IMR-90 (cell line): ENCODE measurements at regions of chr1 and their contacts with region 1.

Region 1: DNA sequence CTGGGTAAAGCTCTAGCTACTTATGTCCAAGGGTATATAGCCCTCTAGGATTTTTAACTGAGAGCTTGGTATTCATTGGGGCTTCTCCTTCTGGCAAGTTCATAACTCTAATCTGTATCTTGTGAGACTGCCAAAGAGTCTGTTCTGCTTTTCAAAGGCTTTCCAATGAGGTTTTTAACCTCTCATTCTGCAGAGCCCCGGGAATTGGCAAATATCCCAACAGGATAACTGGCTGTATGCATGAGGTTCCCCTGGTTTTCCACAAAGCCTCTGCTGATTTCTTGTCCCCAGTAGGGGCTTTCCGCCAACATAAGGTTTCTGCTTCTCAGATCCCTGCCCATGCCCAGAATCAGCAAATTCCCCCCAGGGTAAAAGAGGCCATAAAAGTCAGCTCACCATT is 40.9 kb downstream of the RPL5 start:
- DNase-seq: no peak
- ATAC-seq: no peak
- H3K4me3 ChIP-seq: no peak overlapping the region
- H3K27ac ChIP-seq: no peak overlapping the region
- H3K4me1 ChIP-seq: no peaks in the 10 kb centered on the region
- H3K27me3 ChIP-seq: no peaks in the 10 kb centered on the region
- CTCF ChIP-seq: no peak
- POLR2A ChIP-seq: no peak
- RAD21 ChIP-seq: no peak

Region 2: GRCh38 chr1:92483610-92484471 is 388.9 kb before region 1 on chr1:
- CTCF ChIA-PET with region 1: no interaction called
- POLR2A ChIA-PET with region 1: no interaction called
- dilution Hi-C with region 1: no loop called
- in situ Hi-C with region 1: no loop called
- intact Hi-C with region 1: no loop called
- DNase-seq: no peak
- ATAC-seq: no peak
- H3K4me3 ChIP-seq: no peak overlapping the region
- H3K27ac ChIP-seq: no peak overlapping the region
- H3K4me1 ChIP-seq: peaks cover 8% of the 10 kb centered on the region
- H3K27me3 ChIP-seq: peaks cover 93% of the 10 kb centered on the region
- CTCF ChIP-seq: no peak
- POLR2A ChIP-seq: no peak
- RAD21 ChIP-seq: no peak

Region 3: DNA sequence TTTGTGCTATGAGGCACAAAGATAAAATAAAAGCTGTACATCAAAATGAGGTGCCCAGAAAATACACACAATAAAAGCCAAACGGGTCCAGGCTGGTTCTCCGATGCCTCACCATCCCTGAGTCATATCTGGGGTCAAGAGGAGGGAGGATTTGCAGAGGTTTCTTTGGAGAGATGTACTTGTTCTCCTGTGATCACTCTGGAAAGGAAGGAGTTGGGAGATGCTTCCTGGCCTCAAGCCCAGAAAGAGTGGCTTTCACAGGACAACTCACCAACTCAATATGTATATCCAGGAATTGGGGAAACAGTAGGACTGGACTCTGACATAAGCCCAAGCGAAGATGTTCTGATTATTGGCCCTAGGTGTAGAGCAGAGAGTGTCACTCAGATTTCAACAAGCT is 36.6 kb after region 1 on chr1:
- CTCF ChIA-PET with region 1: no interaction called
- POLR2A ChIA-PET with region 1: no interaction called
- dilution Hi-C with region 1: no loop called
- in situ Hi-C with region 1: no loop called
- intact Hi-C with region 1: loop called (anchors 5 kb)
- DNase-seq: peak; percentile 95
- ATAC-seq: peak; percentile 92
- H3K4me3 ChIP-seq: no peak overlapping the region
- H3K27ac ChIP-seq: no peak overlapping the region
- H3K4me1 ChIP-seq: peaks cover 14% of the 10 kb centered on the region
- H3K27me3 ChIP-seq: no peaks in the 10 kb centered on the region
- CTCF ChIP-seq: no peak
- POLR2A ChIP-seq: no peak
- RAD21 ChIP-seq: no peak